ENCODE measurements at regions of chr11 and their contacts with region 1.

Region 1: GRCh38 chr11:93623179-93623578 is 38.3 kb upstream of the CEP295 start:
- DNase-seq: no peak
- ATAC-seq: no peak
- H3K4me3 ChIP-seq: no peak overlapping the region
- H3K27ac ChIP-seq: no peak overlapping the region
- H3K4me1 ChIP-seq: no peaks in the 10 kb centered on the region
- H3K27me3 ChIP-seq: no peaks in the 10 kb centered on the region
- CTCF ChIP-seq: no peak
- POLR2A ChIP-seq: no peak

Region 2: DNA sequence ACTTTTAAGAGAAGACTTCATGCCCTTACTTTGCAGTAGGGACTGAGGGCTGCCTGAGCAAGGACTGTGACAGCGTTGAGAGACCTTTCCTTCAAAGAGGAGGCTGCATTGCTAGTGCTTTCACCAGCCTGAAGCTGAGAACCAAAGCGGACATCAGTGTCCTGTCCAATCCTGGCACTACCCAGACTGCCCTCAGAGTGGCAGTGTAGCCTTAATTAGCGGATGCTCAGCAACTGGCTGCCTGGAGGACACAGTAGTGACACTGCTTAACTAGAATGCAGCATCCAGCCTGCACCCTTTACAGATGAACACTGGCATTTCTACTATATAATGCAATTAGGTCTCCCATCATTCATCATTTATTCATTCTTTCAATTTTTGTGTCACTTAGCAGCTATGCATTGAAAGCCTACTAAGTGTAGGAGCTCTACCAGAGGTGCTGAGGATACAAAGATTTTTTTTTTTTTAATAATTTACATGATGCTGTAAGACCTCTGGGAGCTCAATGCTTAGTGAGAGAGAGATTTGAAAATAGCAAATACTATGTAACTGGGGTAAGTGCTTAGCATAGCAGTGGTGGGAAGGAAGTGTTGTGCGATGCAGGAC is 388.5 kb before region 1 on chr11:
- in situ Hi-C with region 1: no loop called
- intact Hi-C with region 1: loop called (anchors 1 kb)
- DNase-seq: peak; percentile 42 to 59
- ATAC-seq: peak; percentile 94 to 99
- H3K4me3 ChIP-seq: no peak overlapping the region
- H3K27ac ChIP-seq: no peak overlapping the region
- H3K4me1 ChIP-seq: no peaks in the 10 kb centered on the region
- H3K27me3 ChIP-seq: no peaks in the 10 kb centered on the region
- CTCF ChIP-seq: peak; percentile 71 to 95 (median 86)
- POLR2A ChIP-seq: no peak

Region 3: GRCh38 chr11:93481701-93482100 is 141.5 kb before region 1 on chr11:
- in situ Hi-C with region 1: no loop called
- intact Hi-C with region 1: loop called (anchors 1 kb)
- DNase-seq: no peak
- ATAC-seq: no peak
- H3K4me3 ChIP-seq: no peak overlapping the region
- H3K27ac ChIP-seq: no peak overlapping the region
- H3K4me1 ChIP-seq: no peaks in the 10 kb centered on the region
- H3K27me3 ChIP-seq: no peaks in the 10 kb centered on the region
- CTCF ChIP-seq: peak in 3 of 5 experiments; percentile 14 to 49 (median 22)
- POLR2A ChIP-seq: no peak

Region 4: GRCh38 chr11:93604008-93604660 is 19.0 kb before region 1 on chr11:
- in situ Hi-C with region 1: no loop called
- intact Hi-C with region 1: no loop called
- DNase-seq: no peak
- ATAC-seq: no peak
- H3K4me3 ChIP-seq: no peak overlapping the region
- H3K27ac ChIP-seq: no peak overlapping the region
- H3K4me1 ChIP-seq: no peaks in the 10 kb centered on the region
- H3K27me3 ChIP-seq: no peaks in the 10 kb centered on the region
- CTCF ChIP-seq: no peak
- POLR2A ChIP-seq: no peak

Region 5: GRCh38 chr11:93718057-93718563 is 94.9 kb after region 1 on chr11:
- in situ Hi-C with region 1: no loop called
- intact Hi-C with region 1: no loop called
- DNase-seq: no peak
- ATAC-seq: no peak
- H3K4me3 ChIP-seq: no peak overlapping the region
- H3K27ac ChIP-seq: no peak overlapping the region
- H3K4me1 ChIP-seq: no peaks in the 10 kb centered on the region
- H3K27me3 ChIP-seq: no peaks in the 10 kb centered on the region
- CTCF ChIP-seq: no peak
- POLR2A ChIP-seq: no peak

Measured in gastrocnemius medialis (tissue), 4 donors.